ENCODE measurements at regions of chr2 and their contacts with region 1.

Region 1: DNA sequence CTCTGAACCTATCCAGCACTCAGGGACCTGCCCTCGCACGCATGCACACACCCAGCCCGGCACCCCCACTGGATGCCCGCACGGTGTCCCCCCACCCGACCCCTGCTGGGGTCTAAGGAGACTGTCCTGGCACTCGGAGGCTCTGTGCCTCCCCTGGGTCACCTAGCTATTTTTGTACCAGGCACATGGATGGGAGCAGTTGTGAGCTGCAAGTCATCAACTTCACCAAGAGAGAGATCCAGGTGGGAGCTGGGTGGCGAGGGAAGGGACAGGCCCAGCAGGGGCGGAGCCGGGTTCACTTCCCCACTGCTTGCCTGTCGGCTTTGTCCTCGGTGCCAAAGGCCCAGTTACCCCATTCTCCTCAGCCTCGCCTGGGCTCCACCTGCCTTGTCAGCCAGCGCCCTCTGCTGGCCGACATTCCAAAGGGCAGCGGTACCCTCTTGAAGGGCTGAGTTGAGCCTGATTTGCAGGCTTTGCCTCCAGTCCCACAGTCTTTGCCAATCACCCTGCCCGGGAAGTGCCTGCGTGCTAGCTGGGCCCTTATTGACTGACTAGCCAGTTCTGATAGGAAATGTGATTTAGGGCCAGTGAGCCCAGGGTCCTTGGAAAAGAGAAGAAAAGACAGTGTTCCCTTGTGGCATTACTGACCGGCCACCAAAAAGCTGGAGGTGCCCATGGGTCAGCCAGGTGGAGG is 5.8 kb downstream of the NT5DC4 start:
- DNase-seq: peak; percentile 75 to 99 (median 92)
- ATAC-seq: peak; percentile 97
- H3K4me3 ChIP-seq: no peak overlapping the region
- H3K27ac ChIP-seq: no peak overlapping the region
- H3K4me1 ChIP-seq: peaks cover 0 to 42% of the 10 kb centered on the region in 2 donors
- H3K27me3 ChIP-seq: no peaks in the 10 kb centered on the region
- CTCF ChIP-seq: peak; percentile 93 to 99

Region 2: DNA sequence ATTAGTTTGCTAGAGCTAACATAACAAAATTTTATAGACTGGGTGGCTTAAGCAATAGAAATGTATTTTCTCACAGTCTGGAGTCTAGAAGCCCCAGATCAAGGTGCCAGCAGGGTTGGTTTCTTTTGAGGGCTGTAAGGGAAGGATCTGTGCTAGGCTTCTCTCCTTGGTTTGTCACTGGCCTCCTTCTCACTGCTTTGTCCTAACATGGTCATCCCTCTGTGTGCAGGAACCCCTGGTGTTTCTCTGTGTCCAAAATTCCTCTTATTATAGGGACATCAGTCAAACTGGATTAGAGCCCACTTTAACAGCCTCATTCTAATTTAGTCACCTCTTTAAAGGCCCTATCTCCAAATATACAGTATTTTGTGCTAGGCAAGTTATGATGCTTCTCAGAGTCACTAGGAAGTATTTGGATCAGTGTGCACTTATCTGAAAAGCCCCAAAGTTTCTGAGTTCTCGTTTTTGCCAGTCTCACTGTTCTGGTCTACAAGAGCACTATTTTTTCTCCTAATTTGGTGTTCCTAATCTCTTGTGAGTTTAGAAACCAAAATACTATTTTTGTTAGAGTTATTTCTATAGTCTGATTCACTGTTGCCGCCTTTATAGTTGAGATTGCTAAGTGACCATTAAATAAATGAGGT is 422.2 kb before region 1 on chr2:
- intact Hi-C with region 1: no loop called
- DNase-seq: no peak
- ATAC-seq: no peak
- H3K4me3 ChIP-seq: no peak overlapping the region
- H3K27ac ChIP-seq: no peak overlapping the region
- H3K4me1 ChIP-seq: no peaks in the 10 kb centered on the region
- H3K27me3 ChIP-seq: no peaks in the 10 kb centered on the region
- CTCF ChIP-seq: no peak

Region 3: DNA sequence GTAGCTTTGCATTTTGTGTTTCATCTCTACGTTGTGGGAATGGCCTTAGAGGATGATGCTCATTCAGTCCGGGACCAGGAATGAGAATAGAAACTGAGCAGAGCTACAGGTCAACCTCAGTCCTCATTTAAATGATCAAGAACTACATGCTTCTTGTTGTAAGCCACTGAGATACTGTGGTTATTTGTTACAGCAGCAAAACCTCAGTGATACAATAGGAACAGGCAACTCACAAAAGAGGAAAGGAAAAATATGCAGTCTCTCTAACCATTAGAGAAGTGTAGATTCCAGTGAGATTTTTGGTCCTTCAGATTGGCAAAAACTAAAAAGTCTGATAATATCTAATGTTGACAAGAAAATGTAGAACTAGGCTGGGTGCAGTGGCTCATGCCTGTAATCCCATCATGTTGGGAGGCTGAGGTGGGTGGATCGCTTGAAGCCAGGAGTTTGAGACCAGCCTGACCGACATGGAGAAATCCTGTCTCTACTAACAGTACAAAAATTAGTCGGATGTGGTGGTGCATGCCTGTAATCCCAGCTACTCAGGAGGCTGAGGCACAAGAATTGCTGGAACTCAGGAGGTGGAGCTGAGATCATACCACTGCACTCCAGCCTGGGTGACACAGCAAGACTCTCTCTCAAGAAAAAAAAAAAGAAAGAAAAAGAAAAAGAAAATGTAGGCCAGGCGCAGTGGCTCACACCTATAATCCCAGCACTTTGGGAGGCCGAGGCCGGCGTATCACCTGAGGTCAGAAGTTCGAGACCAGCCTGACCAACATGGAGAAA is 128.9 kb before region 1 on chr2:
- intact Hi-C with region 1: loop called (anchors 5 to 10 kb)
- DNase-seq: no peak
- ATAC-seq: no peak
- H3K4me3 ChIP-seq: no peak overlapping the region
- H3K27ac ChIP-seq: no peak overlapping the region
- H3K4me1 ChIP-seq: peaks cover 0 to 11% of the 10 kb centered on the region in 2 donors
- H3K27me3 ChIP-seq: no peaks in the 10 kb centered on the region
- CTCF ChIP-seq: no peak

Region 4: GRCh38 chr2:112606488-112606902 is 120.1 kb before region 1 on chr2:
- intact Hi-C with region 1: loop called in 1 of 2 experiments (anchors 10 kb)
- DNase-seq: no peak
- ATAC-seq: no peak
- H3K4me3 ChIP-seq: no peak overlapping the region
- H3K27ac ChIP-seq: no peak overlapping the region
- H3K4me1 ChIP-seq: no peaks in the 10 kb centered on the region
- H3K27me3 ChIP-seq: no peaks in the 10 kb centered on the region
- CTCF ChIP-seq: no peak

Region 5: DNA sequence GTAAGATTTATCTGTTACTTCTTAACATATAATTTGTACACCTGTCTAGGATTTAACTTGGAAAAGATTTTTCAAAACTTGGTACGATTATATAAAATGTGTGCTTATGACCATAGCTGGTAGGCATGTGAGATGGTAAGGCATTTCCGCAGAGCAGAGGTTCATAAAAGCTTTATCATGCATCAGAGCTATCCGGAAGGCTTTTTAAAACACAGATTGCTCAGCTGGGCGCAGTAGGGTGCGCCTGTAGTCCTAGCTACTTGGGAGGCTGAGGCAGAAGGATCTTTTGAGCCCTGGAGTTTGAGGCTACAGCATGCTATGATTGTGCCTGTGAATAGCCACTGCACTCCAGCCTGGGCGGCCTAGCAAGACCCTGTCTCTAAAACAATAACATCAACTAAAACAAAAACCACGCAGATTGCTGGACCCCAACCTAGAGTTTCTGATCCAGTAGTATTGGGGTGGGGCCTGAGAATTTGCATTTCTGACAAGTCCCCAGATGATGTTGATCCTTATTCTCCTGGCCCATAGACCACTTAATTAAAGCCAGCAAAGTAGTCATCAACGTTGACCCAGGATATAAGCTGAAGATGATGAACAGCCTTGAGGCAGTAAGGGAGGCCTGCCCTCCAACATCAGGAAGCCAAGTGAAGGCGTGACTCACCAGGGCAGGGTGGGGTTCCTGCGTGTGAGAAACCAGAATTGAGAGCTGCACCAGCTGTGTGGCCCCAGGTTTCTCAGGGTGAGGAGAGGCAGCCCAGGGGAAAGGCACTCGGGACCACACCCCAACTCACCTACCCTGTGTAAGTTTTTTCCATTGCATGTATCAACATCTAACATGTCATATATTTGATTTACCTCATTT is 102.5 kb before region 1 on chr2:
- intact Hi-C with region 1: loop called in 1 of 2 experiments (anchors 5 kb)
- DNase-seq: peak in 1 of 4 donors; percentile 64
- ATAC-seq: peak; percentile 19
- H3K4me3 ChIP-seq: no peak overlapping the region
- H3K27ac ChIP-seq: peak overlapping the region in 1 of 2 donors; percentile 7
- H3K4me1 ChIP-seq: peaks cover 17 to 51% of the 10 kb centered on the region in 2 donors
- H3K27me3 ChIP-seq: no peaks in the 10 kb centered on the region
- CTCF ChIP-seq: no peak

Region 6: DNA sequence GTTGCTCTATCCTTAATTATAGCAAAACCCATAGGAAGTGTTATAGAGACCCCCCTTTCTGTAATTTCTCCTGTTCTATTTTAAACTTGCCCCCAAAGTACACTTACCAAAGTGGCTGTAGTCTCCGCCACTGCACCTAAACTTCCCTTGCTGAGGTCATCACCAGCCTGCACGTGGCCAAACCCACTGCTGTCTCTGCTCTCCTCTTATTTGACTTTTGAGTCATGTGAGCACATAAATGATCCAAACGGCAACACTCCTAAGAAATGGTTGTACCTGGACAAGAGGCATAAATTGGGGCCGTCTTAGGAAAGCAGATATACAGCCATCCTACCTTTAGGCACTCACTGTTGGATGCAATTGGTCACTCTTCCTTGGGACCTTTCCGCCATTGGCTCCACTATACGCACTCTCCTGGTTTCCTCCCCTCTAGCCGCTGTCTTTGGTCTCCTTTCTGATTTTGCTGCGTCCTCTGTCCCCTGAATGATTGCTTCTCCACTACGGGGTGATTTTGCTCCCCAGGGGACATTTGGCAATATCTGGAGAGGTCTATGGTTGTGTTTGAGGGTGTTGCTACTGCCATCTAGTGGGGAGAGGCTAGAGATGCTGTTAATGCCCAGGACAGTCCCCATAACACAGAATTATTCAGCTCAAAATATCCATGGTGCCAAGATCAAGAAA is 231.9 kb after region 1 on chr2:
- intact Hi-C with region 1: no loop called
- DNase-seq: peak in 2 of 4 donors; percentile 46 to 58
- ATAC-seq: peak; percentile 93
- H3K4me3 ChIP-seq: no peak overlapping the region
- H3K27ac ChIP-seq: no peak overlapping the region
- H3K4me1 ChIP-seq: no peaks in the 10 kb centered on the region
- H3K27me3 ChIP-seq: no peaks in the 10 kb centered on the region
- CTCF ChIP-seq: peak; percentile 79 to 82

Region 7: DNA sequence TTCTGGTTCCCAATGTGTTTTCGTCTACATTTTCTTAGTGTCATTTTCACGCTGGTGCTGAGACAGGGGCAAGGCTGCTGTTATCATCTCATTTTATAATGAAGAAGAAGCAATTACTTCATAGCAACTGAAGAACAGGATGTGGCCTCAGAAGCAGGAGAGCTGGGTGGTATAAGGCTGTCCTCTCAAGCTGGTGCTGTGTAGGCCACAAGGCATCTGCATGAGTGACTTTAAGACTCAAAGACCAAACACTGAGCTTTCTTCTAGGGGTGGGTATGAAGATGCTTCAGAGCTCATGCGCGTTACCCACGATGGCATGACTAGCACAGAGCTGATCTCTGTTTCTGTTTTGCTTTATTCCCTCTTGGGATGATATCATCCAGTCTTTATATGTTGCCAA is 258.4 kb after region 1 on chr2:
- intact Hi-C with region 1: no loop called
- DNase-seq: no peak
- ATAC-seq: no peak
- H3K4me3 ChIP-seq: no peak overlapping the region
- H3K27ac ChIP-seq: no peak overlapping the region
- H3K4me1 ChIP-seq: no peaks in the 10 kb centered on the region
- H3K27me3 ChIP-seq: no peaks in the 10 kb centered on the region
- CTCF ChIP-seq: no peak

Region 8: DNA sequence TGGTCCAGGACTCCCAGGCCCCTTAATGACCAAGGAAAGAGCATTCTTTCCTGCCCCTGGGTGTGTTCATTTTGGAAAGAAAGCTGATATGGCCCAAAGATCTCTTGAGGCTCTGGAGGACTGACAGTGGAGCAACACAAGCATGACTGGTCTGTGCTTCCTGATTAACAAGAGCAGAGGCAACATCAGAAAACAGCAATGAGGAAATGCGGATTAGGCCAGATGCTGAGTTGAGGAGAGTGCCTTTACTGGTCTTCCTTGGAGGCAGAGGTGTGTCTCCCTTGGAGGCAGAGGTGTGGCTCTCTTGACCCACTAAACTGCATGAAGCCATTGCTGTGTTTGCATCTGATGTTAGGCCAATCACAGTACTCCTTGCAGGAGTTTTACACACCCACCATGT is 306.1 kb after region 1 on chr2:
- intact Hi-C with region 1: no loop called
- DNase-seq: no peak
- ATAC-seq: no peak
- H3K4me3 ChIP-seq: no peak overlapping the region
- H3K27ac ChIP-seq: no peak overlapping the region
- H3K4me1 ChIP-seq: no peaks in the 10 kb centered on the region
- H3K27me3 ChIP-seq: peaks cover 2 to 18% of the 10 kb centered on the region in 2 donors
- CTCF ChIP-seq: no peak

Measured in left lung (tissue), 14 donors.